Activated T-helper 1 cell treated with anti-CD3 and anti-CD28 coated beads, Interleukin-12 subunit alpha, Interleukin-12 subunit beta, Interleukin-2, Interleukin-4 antibody, amounts not matched to agents 30 ng/mL and 10 ng/mL and 1 ng/mL, durations not matched to agents 14 hours and 24 hours and 36 hours (primary cell): ENCODE measurements at regions of chr10 and their contacts with region 1.

Region 1: DNA sequence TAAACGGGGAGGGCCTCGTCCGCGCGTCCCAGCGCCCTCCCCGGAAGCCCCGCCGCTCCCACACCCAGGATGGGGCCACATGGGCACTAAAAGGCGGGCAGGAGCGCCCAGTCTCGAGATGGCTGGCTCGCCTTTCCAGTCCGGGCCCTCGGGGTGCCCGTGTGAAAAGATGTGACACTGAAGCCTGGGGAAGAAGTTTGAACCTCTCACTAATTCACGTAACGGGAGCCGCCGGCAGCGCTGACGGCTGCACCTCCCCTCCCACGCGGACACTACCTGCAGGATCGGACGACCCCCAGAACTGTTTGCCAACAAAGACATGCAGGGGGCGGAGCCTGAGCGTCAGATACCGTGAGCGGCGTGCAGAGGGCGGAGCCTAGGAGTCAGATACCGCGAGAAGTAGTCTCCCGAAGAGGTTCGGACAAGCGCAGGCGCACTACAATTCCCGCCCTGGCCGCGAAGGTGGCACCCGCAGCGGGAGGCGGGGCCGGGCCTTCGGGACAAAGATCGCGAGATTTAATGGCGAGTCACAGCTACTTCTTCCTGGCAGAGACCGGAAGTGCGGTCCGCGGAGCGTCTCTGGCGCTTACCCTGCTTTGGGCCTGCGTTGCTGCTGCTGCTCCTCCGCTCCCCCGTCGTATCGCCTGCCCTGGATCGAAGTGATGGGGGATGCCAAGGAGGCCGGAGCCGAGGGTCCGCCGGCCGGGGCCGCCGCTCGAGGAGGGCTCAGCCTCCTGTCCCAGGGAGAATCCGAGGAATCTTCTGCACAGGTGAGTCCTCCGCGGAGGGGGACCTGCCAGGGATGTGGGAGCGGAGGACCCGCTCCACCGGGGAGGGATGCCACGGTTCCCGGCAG is at the start of gene EDRF1:
- DNase-seq: peak; percentile 100
- H3K4me3 Mint-ChIP-seq: peak within 1 kb of the TSS; percentile 98
- H3K27ac Mint-ChIP-seq: peak within 1 kb of the TSS; percentile 98
- H3K4me1 Mint-ChIP-seq: peaks cover 21% of the 10 kb centered on the region
- H3K27me3 Mint-ChIP-seq: no peaks in the 10 kb centered on the region
- total RNA-seq, gene EDRF1: 43.4 and 43.9 TPM in 2 replicates

Region 2: GRCh38 chr10:124461438-124462347 is 1257.7 kb before region 1 on chr10 and contains the start of gene LHPP:
- intact Hi-C with region 1: loop called (anchors 2 kb)
- DNase-seq: peak; percentile 86
- H3K4me3 Mint-ChIP-seq: peak within 1 kb of the TSS; percentile 87
- H3K27ac Mint-ChIP-seq: peak within 1 kb of the TSS; percentile 98
- H3K4me1 Mint-ChIP-seq: peaks cover 26% of the 10 kb centered on the region
- H3K27me3 Mint-ChIP-seq: peaks cover 14% of the 10 kb centered on the region
- total RNA-seq, gene LHPP: 4.6 and 5.0 TPM in 2 replicates

Region 3: DNA sequence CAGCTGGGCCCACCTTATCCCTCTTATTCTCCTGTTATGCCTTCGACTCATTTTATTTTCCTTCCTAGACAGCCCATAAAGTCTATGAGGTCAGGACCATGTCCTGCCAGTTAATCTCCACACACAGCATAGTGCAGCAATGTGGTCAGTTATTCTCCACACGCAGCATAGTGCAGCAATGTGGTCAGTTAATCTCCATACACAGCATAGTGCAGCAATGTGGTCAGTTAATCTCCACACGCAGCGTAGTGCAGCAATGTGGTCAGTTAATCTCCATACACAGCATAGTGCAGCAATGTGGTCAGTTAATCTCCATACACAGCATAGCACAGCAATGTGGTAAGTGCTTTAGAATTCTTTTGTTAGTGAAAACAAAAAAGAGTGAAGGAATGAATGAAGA is 114.2 kb before region 1 on chr10:
- intact Hi-C with region 1: no loop called
- DNase-seq: no peak
- H3K4me3 Mint-ChIP-seq: no peak overlapping the region
- H3K27ac Mint-ChIP-seq: no peak overlapping the region
- H3K4me1 Mint-ChIP-seq: no peaks in the 10 kb centered on the region
- H3K27me3 Mint-ChIP-seq: no peaks in the 10 kb centered on the region

Region 4: GRCh38 chr10:125756196-125756595 is 36.8 kb after region 1 on chr10:
- intact Hi-C with region 1: loop called (anchors 5 kb)
- DNase-seq: no peak
- H3K4me3 Mint-ChIP-seq: no peak overlapping the region
- H3K27ac Mint-ChIP-seq: no peak overlapping the region
- H3K4me1 Mint-ChIP-seq: no peaks in the 10 kb centered on the region
- H3K27me3 Mint-ChIP-seq: no peaks in the 10 kb centered on the region

Region 5: DNA sequence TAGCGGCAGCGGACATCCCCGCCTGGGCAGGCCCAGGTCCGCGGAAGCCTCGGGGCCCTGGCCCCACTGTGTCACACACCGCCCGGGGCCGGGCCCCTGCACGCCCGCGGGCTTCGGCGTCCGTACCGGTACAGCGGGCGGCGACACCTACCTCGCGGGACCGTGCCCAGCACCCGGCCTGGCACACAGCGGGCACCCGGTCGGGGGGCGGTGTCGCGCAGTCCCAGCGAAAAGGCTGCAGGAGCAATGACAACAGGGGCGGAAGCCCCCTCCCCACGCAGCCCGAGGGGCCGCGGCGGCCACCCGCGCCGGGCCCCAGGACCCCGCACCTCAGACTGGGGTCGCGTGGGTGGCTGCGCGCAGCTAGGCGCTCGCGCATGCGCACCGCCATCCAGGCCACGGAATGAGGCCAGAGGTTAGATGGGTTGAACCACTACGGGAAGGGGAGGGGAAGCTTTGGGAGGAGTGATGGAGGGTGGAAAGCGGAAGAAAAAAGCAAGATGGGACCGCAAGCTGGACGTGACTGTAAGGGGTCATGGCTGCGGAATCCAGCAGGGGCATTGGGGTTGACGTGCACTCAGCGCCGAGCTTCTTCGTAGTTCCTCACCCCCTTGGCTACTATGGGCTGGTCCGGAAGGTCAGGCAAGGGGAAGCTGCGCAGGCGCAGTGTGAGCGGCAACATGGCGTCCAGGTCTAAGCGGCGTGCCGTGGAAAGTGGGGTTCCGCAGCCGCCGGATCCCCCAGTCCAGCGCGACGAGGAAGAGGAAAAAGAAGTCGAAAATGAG is 103.7 kb after region 1 on chr10 and contains the starts of genes BCCIP and UROS:
- intact Hi-C with region 1: loop called (anchors 1 kb)
- DNase-seq: peak; percentile 86
- H3K4me3 Mint-ChIP-seq: peak within 1 kb of the TSS; percentile 87
- H3K27ac Mint-ChIP-seq: peak within 1 kb of the TSS; percentile 41
- H3K4me1 Mint-ChIP-seq: peaks cover 11% of the 10 kb centered on the region
- H3K27me3 Mint-ChIP-seq: no peaks in the 10 kb centered on the region
- total RNA-seq, gene BCCIP: 127 and 128 TPM in 2 replicates
- total RNA-seq, gene UROS: 49.0 and 57.8 TPM in 2 replicates

Region 6: DNA sequence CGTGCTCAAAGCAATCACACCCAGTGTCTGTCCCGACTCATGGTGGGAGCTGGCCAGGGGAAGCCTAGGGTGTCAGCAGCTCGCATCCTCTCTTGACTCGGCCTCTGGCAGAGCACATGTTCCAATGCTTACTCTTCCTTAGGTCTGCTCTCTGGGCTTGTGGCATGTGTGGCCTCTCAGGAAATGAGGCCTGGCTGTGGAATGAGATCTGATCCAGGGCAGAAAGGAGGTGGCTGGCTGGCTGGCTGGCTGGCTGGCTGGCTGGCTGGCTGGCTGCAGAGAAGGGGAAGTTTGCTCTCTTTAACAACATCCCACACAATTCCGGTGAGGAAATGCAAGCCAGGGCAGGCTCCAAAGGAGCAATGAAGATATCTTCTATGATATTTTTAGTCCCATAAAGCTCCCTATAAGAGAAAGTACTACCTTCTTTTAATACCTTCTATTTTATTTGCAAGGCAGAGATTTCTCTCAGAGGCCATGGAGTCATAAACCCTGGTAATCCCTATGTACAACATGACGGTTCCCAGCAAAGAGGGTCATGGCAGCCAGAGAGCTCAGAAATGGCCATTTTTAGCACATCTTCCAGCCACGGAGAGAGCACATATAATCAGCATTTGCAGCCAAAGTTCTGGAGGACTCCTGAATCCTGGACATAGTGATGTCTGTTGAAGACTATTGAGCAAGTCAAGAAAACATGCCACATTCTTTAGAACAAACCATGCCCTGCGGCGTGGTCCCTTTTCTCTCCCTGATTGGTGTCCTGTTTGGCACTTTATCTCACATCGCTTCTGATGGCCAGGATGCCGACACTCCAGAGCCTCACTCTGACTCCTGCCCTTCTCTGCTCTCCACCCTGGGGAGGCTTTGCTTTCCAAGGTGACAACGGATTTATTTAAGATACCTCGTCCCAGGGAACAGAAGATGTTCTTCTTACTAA is 330.7 kb after region 1 on chr10:
- intact Hi-C with region 1: no loop called
- DNase-seq: no peak
- H3K4me3 Mint-ChIP-seq: no peak overlapping the region
- H3K27ac Mint-ChIP-seq: no peak overlapping the region
- H3K4me1 Mint-ChIP-seq: no peaks in the 10 kb centered on the region
- H3K27me3 Mint-ChIP-seq: no peaks in the 10 kb centered on the region